ENCODE measurements at regions of chr7 and their contacts with region 1.

Region 1: DNA sequence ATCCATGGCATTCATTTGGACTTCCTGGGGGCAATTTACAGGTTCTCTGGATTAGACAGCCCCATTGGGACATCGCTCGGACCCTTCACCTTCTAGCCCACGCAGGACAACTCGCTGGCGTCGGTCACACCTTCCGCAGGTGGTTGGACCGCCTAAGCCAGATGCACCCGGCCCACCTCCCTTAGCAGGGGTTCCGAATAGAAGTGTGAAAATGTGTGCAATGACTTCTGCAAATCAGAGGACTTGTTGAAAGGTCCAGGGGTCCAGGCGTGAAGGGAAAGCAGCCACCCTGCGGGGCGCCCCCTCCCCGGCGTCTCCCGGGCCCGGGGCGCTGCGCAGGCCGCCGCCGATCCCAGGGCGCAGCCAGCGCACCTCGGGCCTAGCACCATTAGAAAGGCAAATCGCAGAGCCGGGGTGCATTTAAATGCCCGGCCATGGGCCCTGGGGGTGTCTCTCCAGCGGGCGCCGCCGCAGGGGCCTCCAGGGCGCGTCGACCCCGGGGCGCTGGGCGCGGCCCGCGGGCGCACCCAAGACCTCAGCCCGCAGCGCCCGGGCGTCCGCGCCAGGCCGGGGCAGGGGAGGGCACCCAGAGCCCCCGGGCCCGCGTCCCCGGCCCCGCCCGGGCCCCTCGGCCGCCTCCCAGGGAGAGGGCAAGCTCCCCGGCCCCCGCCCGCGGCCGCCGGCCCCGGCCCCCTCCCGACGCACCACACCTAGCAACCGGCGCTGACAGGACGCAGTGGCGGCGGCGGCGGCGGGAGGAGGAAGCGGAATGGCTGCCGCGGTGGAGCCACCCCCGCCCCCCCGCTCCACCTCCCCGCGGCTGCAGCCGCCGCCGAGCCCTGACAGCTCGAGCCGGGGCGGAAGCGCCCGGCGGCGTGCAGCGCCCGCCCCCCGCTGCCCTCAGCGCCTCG is 1.2 kb downstream of the JAZF1 start:
- DNase-seq: peak; percentile 84
- H3K4me3 ChIP-seq: peak overlapping the region; percentile 56 to 94 (median 88)
- H3K27ac ChIP-seq: peak overlapping the region; percentile 87 to 95 (median 94)
- H3K4me1 ChIP-seq: peaks cover 0 to 64% (median 55%) of the 10 kb centered on the region in 4 donors
- H3K27me3 ChIP-seq: no peaks in the 10 kb centered on the region
- CTCF ChIP-seq: no peak
- EP300 ChIP-seq: no peak
- POLR2A ChIP-seq: no peak

Region 2: DNA sequence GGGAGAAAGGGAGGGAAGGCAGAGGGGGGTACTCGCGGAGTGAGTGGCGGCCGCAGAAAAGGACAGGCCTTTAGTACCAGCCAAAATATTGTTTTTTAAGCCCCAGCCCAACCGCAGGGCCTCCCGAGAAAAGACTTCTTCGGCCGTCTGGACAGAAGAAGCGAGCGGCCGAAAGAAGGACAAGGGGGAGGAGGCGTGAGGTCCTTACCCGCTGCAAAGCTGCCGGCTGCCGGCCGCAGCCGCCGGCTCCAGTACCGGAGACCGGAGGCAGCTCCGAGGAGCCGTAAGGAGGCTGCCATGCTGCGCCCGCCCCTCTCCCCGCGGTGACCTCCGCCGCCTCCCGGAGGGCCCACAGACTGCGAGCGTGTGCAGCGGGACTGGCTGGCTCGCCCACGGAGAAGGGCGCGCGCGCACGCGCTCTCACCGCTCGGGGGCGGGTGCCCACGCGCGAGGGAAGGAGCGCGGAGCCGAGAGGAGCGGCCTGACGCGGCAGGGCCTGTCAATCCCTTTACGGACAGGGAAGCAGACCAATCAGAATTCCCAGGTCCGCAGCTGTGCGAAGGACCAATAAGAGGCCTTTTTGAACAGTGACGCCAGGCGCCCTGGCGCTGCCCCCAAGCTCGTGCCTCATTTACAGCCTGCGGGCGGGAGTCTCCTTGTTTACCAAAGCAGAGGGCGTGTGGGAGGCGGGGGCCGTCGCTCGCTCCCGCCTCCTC is 516.7 kb before region 1 on chr7 and contains the start of gene HIBADH:
- intact Hi-C with region 1: loop called (anchors 10 kb)
- DNase-seq: peak; percentile 100
- H3K4me3 ChIP-seq: peak within 1 kb of the TSS; percentile 72 to 97 (median 90)
- H3K27ac ChIP-seq: peak within 1 kb of the TSS; percentile 91 to 99 (median 93)
- H3K4me1 ChIP-seq: peaks cover 0 to 16% (median 13%) of the 10 kb centered on the region in 4 donors
- H3K27me3 ChIP-seq: no peaks in the 10 kb centered on the region
- CTCF ChIP-seq: peak in 1 of 4 experiments; percentile 17
- EP300 ChIP-seq: peak in 3 of 4 donors; percentile 59 to 88 (median 74)
- POLR2A ChIP-seq: peak; percentile 69 to 84
- total RNA-seq, gene HIBADH: 63.5 to 89.5 (median 80.0) TPM

Region 3: DNA sequence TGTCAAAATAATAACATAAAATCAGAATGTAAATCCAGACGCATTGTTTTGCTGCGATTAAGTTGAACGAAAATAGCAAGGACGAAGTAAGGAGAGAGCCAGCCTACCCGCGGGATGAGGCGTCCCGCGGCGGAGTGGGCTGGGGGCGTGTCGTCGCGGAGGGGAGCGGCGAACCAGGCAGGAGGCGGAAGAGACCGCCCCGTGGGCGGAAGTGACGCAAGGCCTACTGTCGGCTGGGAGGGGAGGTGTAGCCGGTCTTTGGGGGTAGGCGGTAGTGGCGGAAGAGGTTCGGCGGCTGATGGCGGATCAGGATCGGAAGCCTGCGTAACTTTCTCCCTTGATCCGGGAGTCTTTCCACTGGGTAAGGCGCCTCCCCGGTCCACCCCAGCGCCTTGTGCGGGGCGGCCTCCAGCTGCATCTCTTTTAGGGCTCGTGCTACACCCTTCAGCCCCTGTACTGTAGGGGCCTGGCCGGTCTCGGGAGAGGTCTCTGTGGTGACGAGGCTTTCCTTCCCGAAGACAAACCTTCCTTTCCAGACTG is 439.4 kb before region 1 on chr7 and contains the start of gene TAX1BP1:
- intact Hi-C with region 1: loop called (anchors 5 kb)
- DNase-seq: peak; percentile 98
- H3K4me3 ChIP-seq: peak within 1 kb of the TSS; percentile 68 to 93 (median 90)
- H3K27ac ChIP-seq: peak within 1 kb of the TSS; percentile 93 to 99 (median 97)
- H3K4me1 ChIP-seq: peaks cover 0 to 47% (median 31%) of the 10 kb centered on the region in 4 donors
- H3K27me3 ChIP-seq: no peaks in the 10 kb centered on the region
- CTCF ChIP-seq: no peak
- EP300 ChIP-seq: peak in 1 of 4 donors; percentile 18
- POLR2A ChIP-seq: peak; percentile 99
- total RNA-seq, gene TAX1BP1: 109 to 170 (median 138) TPM

Region 4: DNA sequence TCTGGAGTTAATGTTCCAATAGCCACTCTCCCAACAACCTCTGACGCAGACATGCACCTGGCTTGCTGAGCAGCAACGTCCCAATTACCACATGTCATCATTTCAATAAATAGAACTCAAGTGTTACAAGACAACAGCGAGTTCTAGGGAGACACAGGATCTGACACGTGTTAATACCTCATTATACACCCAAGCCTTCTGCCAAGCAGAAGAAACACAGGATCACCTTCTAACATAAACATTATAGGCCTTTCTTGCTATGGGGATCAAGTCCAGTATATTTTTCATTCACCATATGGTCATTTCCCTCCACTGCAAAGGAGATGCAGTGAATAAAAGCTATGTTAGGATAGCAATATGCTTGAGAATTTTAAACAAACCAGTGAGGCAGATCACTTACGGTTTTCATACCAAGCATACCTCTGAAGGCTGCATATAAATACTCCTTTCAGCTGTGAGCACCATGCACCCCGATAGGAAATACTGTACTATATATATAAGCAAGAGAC is 73.0 kb before region 1 on chr7:
- intact Hi-C with region 1: loop called (anchors 5 kb)
- DNase-seq: no peak
- H3K4me3 ChIP-seq: no peak overlapping the region
- H3K27ac ChIP-seq: peak overlapping the region; percentile 72 to 79 (median 73)
- H3K4me1 ChIP-seq: peaks cover 0 to 74% (median 60%) of the 10 kb centered on the region in 4 donors
- H3K27me3 ChIP-seq: no peaks in the 10 kb centered on the region
- CTCF ChIP-seq: no peak
- EP300 ChIP-seq: peak; percentile 54 to 87 (median 81)
- POLR2A ChIP-seq: no peak

Region 5: DNA sequence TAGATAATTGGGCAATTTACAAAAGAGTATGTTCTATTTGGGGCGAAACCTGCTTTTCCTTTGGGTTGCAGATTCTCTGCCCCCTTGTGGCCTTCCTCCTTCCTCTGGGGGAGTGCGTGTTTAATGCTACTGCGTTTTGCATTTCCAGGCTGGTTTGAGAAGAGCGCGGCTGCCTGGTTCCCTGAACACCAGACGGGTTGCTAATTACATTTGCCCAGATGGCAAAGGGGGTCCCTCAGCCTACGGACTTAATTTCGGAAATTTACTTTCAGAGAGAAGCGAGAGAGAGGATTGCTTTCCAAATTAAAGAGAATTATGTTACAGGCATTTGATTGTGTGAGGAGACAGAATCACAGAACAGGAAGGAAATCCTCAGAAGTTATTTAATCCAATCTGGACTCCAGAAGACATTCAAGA is 93.1 kb after region 1 on chr7:
- intact Hi-C with region 1: loop called (anchors 5 kb)
- DNase-seq: peak; percentile 70
- H3K4me3 ChIP-seq: peak overlapping the region in 2 of 4 donors; percentile 12
- H3K27ac ChIP-seq: no peak overlapping the region
- H3K4me1 ChIP-seq: peaks cover 0 to 6% (median 0%) of the 10 kb centered on the region in 4 donors
- H3K27me3 ChIP-seq: no peaks in the 10 kb centered on the region
- CTCF ChIP-seq: peak; percentile 40 to 65 (median 48)
- EP300 ChIP-seq: no peak
- POLR2A ChIP-seq: no peak

Region 6: GRCh38 chr7:28408960-28409715 is 229.8 kb after region 1 on chr7:
- intact Hi-C with region 1: loop called (anchors 10 kb)
- DNase-seq: peak; percentile 99
- H3K4me3 ChIP-seq: peak overlapping the region; percentile 45 to 77 (median 64)
- H3K27ac ChIP-seq: peak overlapping the region; percentile 86 to 93 (median 92)
- H3K4me1 ChIP-seq: peaks cover 0 to 43% (median 23%) of the 10 kb centered on the region in 4 donors
- H3K27me3 ChIP-seq: no peaks in the 10 kb centered on the region
- CTCF ChIP-seq: no peak
- EP300 ChIP-seq: peak in 1 of 4 donors; percentile 6
- POLR2A ChIP-seq: peak; percentile 50 to 67

Region 7: DNA sequence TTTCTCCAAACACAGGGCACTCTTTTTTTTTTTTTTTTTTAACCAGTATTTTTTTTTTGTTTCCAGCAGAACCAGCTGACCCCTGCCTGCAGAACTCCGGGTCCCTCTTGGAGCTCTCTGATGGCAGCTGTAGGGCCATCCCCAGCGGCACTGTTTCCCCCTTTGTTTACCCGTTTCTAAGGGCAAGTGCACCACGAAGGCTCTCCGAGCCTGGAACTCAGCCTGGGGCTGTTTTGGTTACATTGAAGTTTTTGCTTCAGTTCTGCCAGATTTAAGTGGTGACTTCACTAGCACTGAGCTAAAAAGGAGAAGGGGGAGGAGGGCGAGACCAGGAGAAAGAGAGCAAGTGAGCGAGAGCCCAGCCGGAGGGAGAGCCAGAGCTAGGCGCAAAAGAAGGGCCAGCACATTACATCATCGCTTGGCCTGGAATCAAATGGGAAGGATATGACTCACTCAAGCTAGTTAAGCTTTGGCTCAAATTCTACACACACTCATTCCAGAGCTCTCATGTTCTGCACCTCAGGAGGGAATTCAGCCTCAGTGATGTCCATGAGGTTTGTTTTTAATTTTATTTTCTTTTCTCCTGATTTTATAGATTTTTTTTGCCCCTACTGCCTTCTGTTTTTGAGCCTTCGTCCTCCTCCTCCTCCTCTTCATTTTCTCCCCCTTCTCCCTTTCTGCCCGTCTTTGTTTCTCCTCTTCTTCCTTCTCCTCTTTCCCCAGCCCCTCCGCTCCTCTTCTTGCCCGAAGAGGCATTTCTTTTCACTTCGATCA is 506.5 kb after region 1 on chr7:
- intact Hi-C with region 1: loop called (anchors 10 kb)
- DNase-seq: peak; percentile 98
- H3K4me3 ChIP-seq: peak overlapping the region; percentile 11 to 50 (median 44)
- H3K27ac ChIP-seq: peak overlapping the region; percentile 81 to 92 (median 87)
- H3K4me1 ChIP-seq: peaks cover 0 to 47% (median 29%) of the 10 kb centered on the region in 4 donors
- H3K27me3 ChIP-seq: no peaks in the 10 kb centered on the region
- CTCF ChIP-seq: no peak
- EP300 ChIP-seq: peak in 2 of 4 donors; percentile 12 to 24
- POLR2A ChIP-seq: peak; percentile 41 to 81